ENCODE measurements at regions of chr15 and their contacts with region 1.

Region 1: GRCh38 chr15:27241943-27242342 is 271.0 kb downstream of the GABRG3 start:
- DNase-seq: no peak
- H3K4me3 ChIP-seq: no peak overlapping the region
- H3K27ac ChIP-seq: no peak overlapping the region
- H3K4me1 ChIP-seq: no peaks in the 10 kb centered on the region
- H3K27me3 ChIP-seq: no peaks in the 10 kb centered on the region
- CTCF ChIP-seq: no peak
- POLR2A ChIP-seq: no peak

Region 2: GRCh38 chr15:27278761-27279160 is 36.8 kb after region 1 on chr15:
- intact Hi-C with region 1: loop called (anchors 2 kb)
- DNase-seq: no peak
- H3K4me3 ChIP-seq: no peak overlapping the region
- H3K27ac ChIP-seq: no peak overlapping the region
- H3K4me1 ChIP-seq: no peaks in the 10 kb centered on the region
- H3K27me3 ChIP-seq: no peaks in the 10 kb centered on the region
- CTCF ChIP-seq: no peak
- POLR2A ChIP-seq: no peak